GM10248 (cell line): ENCODE measurements at regions of chr11 and their contacts with region 1.

Region 1: DNA sequence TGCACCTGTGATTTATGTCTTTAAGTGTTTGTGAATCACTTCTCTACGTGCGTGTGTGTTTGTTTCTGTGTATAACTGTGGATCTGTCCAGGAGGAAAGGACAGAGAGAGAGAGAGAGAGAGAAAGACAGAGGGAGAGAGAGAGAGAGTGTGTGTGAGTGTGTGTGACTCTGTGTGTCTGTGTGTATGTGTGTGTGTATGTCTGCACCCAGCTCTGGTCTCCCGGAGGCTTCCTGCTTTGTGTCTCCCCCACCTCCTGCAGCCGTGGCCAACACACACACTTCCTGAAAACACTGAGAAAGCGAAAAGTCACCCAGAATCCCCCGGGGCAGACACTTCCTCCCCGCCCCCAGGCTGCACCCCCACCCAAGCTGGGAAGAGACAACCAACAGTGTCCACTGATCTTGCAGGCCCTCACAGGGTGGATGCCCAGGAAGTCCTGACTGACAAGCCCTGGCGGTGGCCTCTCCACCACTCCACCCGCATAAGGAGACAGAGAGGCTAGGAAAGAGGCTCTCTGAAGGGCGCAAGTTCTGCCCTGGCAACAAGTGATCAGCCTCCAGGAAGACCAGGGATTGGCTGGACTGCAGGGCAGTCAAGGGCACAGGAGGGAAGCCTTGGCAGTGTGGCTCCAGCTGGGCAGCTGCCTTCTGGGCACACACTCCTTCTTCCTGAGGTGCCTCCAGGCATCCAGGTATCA is 30.0 kb downstream of the ARAP1 start:
- DNase-seq: peak; percentile 94
- CTCF ChIP-seq: no peak

Region 2: GRCh38 chr11:72697814-72698213 is 24.4 kb before region 1 on chr11:
- CTCF ChIA-PET with region 1: no interaction called
- POLR2A ChIA-PET with region 1: no interaction called
- DNase-seq: no peak
- CTCF ChIP-seq: no peak

Region 3: GRCh38 chr11:72736452-72737069 is 14.4 kb after region 1 on chr11:
- CTCF ChIA-PET with region 1: interaction called, 107 read pairs
- POLR2A ChIA-PET with region 1: no interaction called
- DNase-seq: peak; percentile 50
- CTCF ChIP-seq: no peak

Region 4: DNA sequence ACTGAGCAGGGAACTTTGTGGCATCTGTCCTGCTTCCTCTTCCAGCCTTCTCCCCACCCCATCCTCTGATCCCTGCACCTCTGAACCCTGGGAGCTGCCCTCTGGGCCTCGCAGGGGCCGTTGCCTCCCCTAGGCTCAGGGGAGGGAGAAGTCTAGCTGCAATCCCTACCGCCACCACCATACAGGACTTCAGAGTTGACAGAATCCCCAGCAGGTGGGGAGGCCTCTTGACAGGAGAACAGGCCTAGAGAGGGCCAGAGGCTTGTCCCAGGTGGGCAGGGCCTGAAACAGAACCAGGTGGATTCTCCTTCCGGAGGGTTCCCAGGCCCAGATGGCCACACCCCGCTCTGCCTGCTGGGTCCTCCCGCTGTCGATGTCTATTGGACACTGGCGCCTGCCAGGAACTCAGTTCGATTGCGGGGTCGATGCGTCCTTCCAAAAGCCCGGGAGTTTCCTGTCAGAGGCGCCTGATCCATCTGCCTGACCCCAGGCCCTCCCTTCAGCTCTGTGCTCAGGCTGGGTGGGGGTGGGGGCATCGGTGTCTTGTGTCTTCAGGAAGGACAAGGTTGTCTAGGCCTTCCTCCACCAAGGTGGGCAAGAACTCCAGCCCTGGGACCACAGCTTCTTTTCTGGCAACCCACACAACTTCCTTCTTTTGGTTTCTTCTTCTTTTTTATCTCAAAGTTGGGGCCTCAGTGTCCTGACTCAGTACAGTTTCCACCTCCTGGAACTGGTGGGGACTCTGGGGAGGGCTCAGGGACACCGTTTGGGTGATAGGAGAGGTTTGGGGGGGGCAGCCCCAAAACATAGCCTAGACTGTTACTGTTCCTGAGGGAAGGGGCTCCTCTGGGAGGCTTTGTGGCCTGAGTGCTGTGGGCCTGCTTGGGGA is 65.3 kb after region 1 on chr11:
- CTCF ChIA-PET with region 1: interaction called, 76 read pairs
- POLR2A ChIA-PET with region 1: interaction called, 3 read pairs
- DNase-seq: peak; percentile 78
- CTCF ChIP-seq: no peak

Region 5: GRCh38 chr11:72814286-72815109 is 92.3 kb after region 1 on chr11 and contains the start of gene ATG16L2:
- CTCF ChIA-PET with region 1: interaction called, 83 read pairs
- POLR2A ChIA-PET with region 1: interaction called, 8 read pairs
- DNase-seq: peak; percentile 95
- CTCF ChIP-seq: peak; percentile 25

Region 6: DNA sequence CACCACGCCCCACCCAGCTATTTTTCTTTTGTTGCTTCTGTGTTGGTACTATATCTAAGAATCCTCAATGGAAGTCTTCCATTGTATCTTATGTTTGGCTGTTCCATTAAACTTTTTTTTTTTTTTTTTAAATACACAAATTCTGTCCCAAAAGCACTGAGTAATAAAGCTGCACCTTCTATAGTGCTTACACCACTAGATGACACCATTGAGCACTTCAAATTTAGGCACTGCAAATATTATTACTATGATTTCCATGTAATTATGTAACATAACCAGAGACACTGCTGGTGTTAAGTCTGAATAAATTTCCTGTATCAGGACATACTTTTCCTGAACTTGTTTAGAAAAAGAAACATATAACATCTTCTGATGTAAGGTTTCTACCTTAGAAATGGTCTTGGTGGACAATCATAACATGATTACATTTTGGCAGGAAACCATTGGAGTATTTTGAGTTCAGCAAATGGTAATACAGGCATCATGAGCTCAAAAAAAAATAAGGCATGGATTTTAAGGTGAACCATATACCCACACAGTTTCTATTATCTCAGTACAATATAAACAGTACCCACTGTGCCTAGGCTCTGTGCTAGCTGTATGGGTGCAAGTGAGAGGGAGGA is 202.5 kb after region 1 on chr11:
- CTCF ChIA-PET with region 1: no interaction called
- POLR2A ChIA-PET with region 1: no interaction called
- DNase-seq: peak; percentile 31
- CTCF ChIP-seq: peak; percentile 48

Region 7: DNA sequence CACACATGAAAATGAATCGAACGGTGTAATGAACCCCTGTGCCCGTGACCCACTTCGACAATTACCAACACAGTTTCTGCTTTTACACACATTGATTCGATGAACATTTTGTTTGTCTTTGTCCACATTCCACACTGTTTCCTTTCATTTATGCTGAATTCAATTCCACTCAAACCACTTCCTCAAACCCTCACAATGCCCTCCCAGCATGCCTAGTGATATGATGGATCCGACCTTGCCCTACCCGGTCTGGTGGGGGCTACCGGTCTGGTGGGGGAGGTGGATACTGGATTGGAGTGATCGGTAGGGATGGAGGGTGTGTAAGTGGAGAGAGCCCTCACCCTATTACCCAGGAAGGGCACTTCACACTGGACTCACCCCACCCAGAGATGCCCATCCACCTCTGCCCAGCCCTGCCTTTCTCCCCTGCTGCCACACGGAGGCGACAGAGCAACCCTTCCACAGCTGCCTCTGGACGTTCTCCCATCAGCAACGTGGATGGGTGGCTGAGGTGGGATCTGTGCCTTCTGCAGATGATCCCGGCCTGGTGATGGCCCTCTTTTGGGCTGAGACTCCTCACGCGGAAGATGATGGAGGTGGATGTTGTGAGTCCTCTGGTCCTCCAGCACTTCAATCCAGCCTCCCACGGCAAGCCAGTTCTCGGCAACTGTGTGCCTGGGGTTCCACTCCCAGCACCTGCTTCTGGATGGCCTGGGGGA is 462.9 kb after region 1 on chr11:
- CTCF ChIA-PET with region 1: interaction called, 61 read pairs
- POLR2A ChIA-PET with region 1: no interaction called
- DNase-seq: peak; percentile 72
- CTCF ChIP-seq: peak; percentile 95